Activated CD4-positive, alpha-beta T cell treated with anti-CD3 and anti-CD28 coated beads for 36 hours (primary cell): ENCODE measurements at regions of chr11 and their contacts with region 1.

Region 1: GRCh38 chr11:119363851-119364590 is 17.5 kb downstream of the USP2 start:
- DNase-seq: peak; percentile 74
- ATAC-seq: peak; percentile 49
- H3K4me3 Mint-ChIP-seq: peak overlapping the region; percentile 37
- H3K27ac Mint-ChIP-seq: no peak overlapping the region
- H3K4me1 Mint-ChIP-seq: peaks cover 26% of the 10 kb centered on the region
- H3K27me3 Mint-ChIP-seq: peaks cover 38% of the 10 kb centered on the region

Region 2: DNA sequence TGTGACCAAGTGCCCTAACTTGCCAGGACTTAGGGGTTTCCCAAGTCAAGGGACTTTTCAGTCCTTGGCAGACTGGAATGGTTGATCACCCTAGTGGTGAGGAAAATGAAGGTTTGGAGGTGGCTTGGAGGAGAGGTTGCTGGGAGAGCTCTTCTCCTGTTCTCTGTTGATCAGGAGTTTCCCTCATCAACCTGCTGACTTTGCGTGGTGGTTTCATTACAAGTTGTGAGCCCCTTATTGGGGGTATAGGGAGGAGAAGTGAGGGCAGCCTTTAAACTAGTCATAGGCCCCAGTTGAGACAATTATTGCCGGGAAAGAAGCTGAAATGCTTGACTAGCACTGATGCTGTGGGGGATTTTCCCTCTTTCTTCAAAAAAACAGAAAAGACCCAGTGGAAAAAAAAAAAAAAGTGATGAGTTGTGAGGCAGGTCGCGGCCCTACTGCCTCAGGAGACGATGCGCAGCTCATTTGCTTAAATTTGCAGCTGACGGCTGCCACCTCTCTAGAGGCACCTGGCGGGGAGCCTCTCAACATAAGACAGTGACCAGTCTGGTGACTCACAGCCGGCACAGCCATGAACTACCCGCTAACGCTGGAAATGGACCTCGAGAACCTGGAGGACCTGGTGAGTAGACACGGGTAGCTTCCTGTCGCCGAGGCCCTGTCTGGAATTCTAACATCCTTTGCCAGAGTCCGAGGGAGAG is 480.5 kb before region 1 on chr11 and contains the start of gene CXCR5:
- CTCF ChIA-PET with region 1: no interaction called
- POLR2A ChIA-PET with region 1: no interaction called
- intact Hi-C with region 1: no loop called
- DNase-seq: peak; percentile 80
- ATAC-seq: peak; percentile 68
- H3K4me3 Mint-ChIP-seq: peak within 1 kb of the TSS; percentile 75
- H3K27ac Mint-ChIP-seq: peak within 1 kb of the TSS; percentile 90
- H3K4me1 Mint-ChIP-seq: peaks cover 80% of the 10 kb centered on the region
- H3K27me3 Mint-ChIP-seq: no peaks in the 10 kb centered on the region
- total RNA-seq, gene CXCR5: 18.9 to 21.3 TPM

Region 3: DNA sequence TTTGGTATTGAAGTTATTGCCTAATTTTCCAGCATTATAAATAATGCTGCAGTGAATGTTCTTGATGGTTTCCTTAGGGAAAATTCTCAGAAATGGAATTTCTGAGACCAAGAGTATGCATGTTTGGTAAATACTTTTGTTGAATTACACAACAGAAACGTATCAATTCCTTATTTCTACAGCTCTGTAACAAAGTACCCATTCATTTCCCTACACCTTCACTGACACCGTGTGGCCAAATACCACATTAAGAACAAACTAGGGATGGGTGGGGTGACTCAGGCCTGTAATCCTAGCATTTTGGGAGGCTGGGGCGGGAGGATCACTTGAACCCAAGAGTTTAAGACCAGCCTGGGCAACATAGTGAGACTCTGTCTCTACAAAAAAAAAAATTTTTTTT is 68.8 kb before region 1 on chr11:
- CTCF ChIA-PET with region 1: no interaction called
- POLR2A ChIA-PET with region 1: no interaction called
- intact Hi-C with region 1: no loop called
- DNase-seq: no peak
- ATAC-seq: no peak
- H3K4me3 Mint-ChIP-seq: no peak overlapping the region
- H3K27ac Mint-ChIP-seq: no peak overlapping the region
- H3K4me1 Mint-ChIP-seq: no peaks in the 10 kb centered on the region
- H3K27me3 Mint-ChIP-seq: no peaks in the 10 kb centered on the region

Region 4: GRCh38 chr11:119373921-119374631 is 10.1 kb after region 1 on chr11:
- CTCF ChIA-PET with region 1: interaction called, 153 read pairs
- POLR2A ChIA-PET with region 1: no interaction called
- intact Hi-C with region 1: no loop called
- DNase-seq: peak; percentile 71
- ATAC-seq: peak; percentile 55
- H3K4me3 Mint-ChIP-seq: no peak overlapping the region
- H3K27ac Mint-ChIP-seq: no peak overlapping the region
- H3K4me1 Mint-ChIP-seq: peaks cover 6% of the 10 kb centered on the region
- H3K27me3 Mint-ChIP-seq: peaks cover 2% of the 10 kb centered on the region

Region 5: GRCh38 chr11:119381181-119381988 is 17.4 kb after region 1 on chr11 and contains the start of gene USP2:
- CTCF ChIA-PET with region 1: interaction called, 153 read pairs
- POLR2A ChIA-PET with region 1: no interaction called
- intact Hi-C with region 1: loop called in 1 of 2 experiments (anchors 1 kb)
- DNase-seq: peak; percentile 98
- ATAC-seq: peak; percentile 98
- H3K4me3 Mint-ChIP-seq: no peak within 1 kb of the TSS
- H3K27ac Mint-ChIP-seq: peak within 1 kb of the TSS; percentile 18
- H3K4me1 Mint-ChIP-seq: peaks cover 7% of the 10 kb centered on the region
- H3K27me3 Mint-ChIP-seq: no peaks in the 10 kb centered on the region
- total RNA-seq, gene USP2: 0.58 to 0.71 TPM

Region 6: GRCh38 chr11:119599864-119600541 is 236.0 kb after region 1 on chr11:
- CTCF ChIA-PET with region 1: no interaction called
- POLR2A ChIA-PET with region 1: no interaction called
- intact Hi-C with region 1: no loop called
- DNase-seq: no peak
- ATAC-seq: no peak
- H3K4me3 Mint-ChIP-seq: no peak overlapping the region
- H3K27ac Mint-ChIP-seq: no peak overlapping the region
- H3K4me1 Mint-ChIP-seq: no peaks in the 10 kb centered on the region
- H3K27me3 Mint-ChIP-seq: peaks cover 13% of the 10 kb centered on the region